Astrocyte of the cerebellum (primary cell): ENCODE measurements at regions of chr2 and their contacts with region 1.

Region 1: GRCh38 chr2:207750345-207750744 is 19.4 kb downstream of the FZD5 start:
- DNase-seq: no peak
- H3K4me3 ChIP-seq: no peak overlapping the region
- CTCF ChIP-seq: no peak

Region 2: GRCh38 chr2:206561962-206562361 is 1188.4 kb before region 1 on chr2:
- in situ Hi-C with region 1: no loop called
- DNase-seq: no peak
- H3K4me3 ChIP-seq: no peak overlapping the region
- CTCF ChIP-seq: no peak

Region 3: GRCh38 chr2:208025037-208025813 is 274.9 kb after region 1 on chr2 and contains the start of gene PLEKHM3:
- in situ Hi-C with region 1: loop called (anchors 10 kb)
- DNase-seq: peak; percentile 61
- H3K4me3 ChIP-seq: peak within 1 kb of the TSS; percentile 79
- CTCF ChIP-seq: no peak